CD14-positive monocyte (primary cell): ENCODE measurements at regions of chr1 and their contacts with region 1.

Region 1: GRCh38 chr1:15595809-15596617 is 11.2 kb upstream of the AGMAT start:
- DNase-seq: no peak
- H3K4me3 ChIP-seq: no peak overlapping the region
- H3K4me3 Mint-ChIP-seq: no peak overlapping the region
- H3K27ac ChIP-seq: no peak overlapping the region
- H3K27ac Mint-ChIP-seq: peak overlapping the region in 1 of 7 donors; percentile 21
- H3K4me1 ChIP-seq: no peaks in the 10 kb centered on the region
- H3K4me1 Mint-ChIP-seq: peaks cover 2% of the 10 kb centered on the region
- H3K27me3 ChIP-seq: no peaks in the 10 kb centered on the region
- H3K27me3 Mint-ChIP-seq: peaks cover 5 to 20% (median 8%) of the 10 kb centered on the region in 3 donors
- CTCF ChIP-seq: no peak

Region 2: DNA sequence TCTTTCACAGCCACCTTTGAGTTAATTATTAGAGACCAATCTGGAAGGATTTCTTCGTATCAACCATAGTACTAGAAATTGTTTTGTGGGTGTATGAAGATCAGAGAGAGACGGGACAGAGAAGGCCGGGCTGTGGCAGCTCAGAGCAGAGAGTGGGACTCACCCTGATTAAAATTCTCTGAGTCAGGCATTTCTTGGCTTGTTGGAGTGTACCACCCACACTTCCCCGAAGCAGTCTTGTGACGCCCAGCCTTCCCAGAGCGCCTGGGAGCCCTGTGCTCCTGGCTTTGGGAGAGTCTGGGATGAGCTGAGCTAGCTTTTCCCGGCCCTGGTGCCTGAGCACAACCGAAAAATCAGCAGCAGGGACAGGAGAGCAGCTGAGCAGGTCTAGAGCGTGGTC is 107.5 kb after region 1 on chr1:
- intact Hi-C with region 1: no loop called
- DNase-seq: no peak
- H3K4me3 ChIP-seq: no peak overlapping the region
- H3K4me3 Mint-ChIP-seq: no peak overlapping the region
- H3K27ac ChIP-seq: peak overlapping the region in 1 of 2 donors; percentile 38
- H3K27ac Mint-ChIP-seq: peak overlapping the region in 6 of 7 donors; percentile 0 to 79 (median 34)
- H3K4me1 ChIP-seq: peaks cover 0 to under 1% of the 10 kb centered on the region in 2 donors
- H3K4me1 Mint-ChIP-seq: peaks cover 13% of the 10 kb centered on the region
- H3K27me3 ChIP-seq: no peaks in the 10 kb centered on the region
- H3K27me3 Mint-ChIP-seq: peaks cover 0 to 4% (median 2%) of the 10 kb centered on the region in 3 donors
- CTCF ChIP-seq: no peak

Region 3: GRCh38 chr1:15741183-15741850 is 145.3 kb after region 1 on chr1:
- intact Hi-C with region 1: loop called in 1 of 2 experiments (anchors 2 kb)
- DNase-seq: peak; percentile 23 to 48 (median 25)
- H3K4me3 ChIP-seq: no peak overlapping the region
- H3K4me3 Mint-ChIP-seq: no peak overlapping the region
- H3K27ac ChIP-seq: no peak overlapping the region
- H3K27ac Mint-ChIP-seq: peak overlapping the region in 1 of 7 donors; percentile 19
- H3K4me1 ChIP-seq: no peaks in the 10 kb centered on the region
- H3K4me1 Mint-ChIP-seq: peaks cover 4% of the 10 kb centered on the region
- H3K27me3 ChIP-seq: no peaks in the 10 kb centered on the region
- H3K27me3 Mint-ChIP-seq: peaks cover 0 to 6% (median 1%) of the 10 kb centered on the region in 3 donors
- CTCF ChIP-seq: peak; percentile 75